ENCODE measurements at regions of chr14 and their contacts with region 1.

Region 1: GRCh38 chr14:65804752-65805473 is 392.4 kb downstream of the FUT8 start:
- DNase-seq: no peak

Region 2: DNA sequence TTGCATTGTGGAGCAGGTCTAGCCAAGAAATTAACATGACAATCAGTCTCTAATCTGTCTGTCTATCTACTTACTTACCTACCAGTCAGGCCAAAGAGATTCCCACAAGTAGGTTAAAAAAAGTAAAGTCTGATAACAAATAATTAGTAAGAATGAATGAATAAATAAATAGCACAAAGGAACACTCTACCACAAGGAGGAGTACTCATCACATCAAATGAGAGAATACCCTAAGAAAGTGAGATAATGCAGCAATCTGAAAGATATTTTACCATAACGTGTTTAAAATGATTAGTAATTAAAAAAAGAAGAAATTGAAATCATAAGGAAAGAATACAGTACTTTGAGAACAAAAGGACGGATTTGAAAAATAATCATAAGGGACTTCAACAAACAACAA is 1764.9 kb before region 1 on chr14:
- intact Hi-C with region 1: no loop called
- DNase-seq: no peak

Region 3: GRCh38 chr14:65483647-65484046 is 321.3 kb before region 1 on chr14:
- intact Hi-C with region 1: loop called in 1 of 2 experiments (anchors 10 kb)
- DNase-seq: no peak